GM12878 (cell line): ENCODE measurements at regions of chr5 and their contacts with region 1.

Region 1: DNA sequence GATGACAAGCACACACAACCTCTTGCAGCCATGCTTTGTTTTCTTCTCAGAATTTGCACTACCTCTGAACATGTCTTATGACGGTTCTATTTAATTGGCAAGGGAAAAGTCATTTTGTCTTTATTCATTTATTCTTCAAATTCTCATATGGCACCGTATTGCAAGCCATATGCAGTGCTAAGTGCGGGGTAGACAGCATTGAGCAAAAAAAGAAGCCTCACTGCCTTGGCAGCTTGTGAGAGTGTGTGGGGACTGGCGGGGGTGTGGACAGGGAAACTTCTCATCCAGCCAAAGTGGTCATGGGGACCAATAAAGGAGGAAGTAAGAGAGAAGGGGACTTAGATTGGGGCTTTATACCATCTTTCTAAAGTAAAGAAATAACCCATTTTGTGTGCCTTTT is 160.0 kb downstream of the CDH12 start:
- DNase-seq: no peak
- ATAC-seq: no peak
- H3K4me3 ChIP-seq: no peak overlapping the region
- H3K27ac ChIP-seq: no peak overlapping the region
- H3K4me1 ChIP-seq: no peaks in the 10 kb centered on the region
- H3K27me3 ChIP-seq: no peaks in the 10 kb centered on the region
- CTCF ChIP-seq: no peak
- EP300 ChIP-seq: no peak
- POLR2A ChIP-seq: no peak
- RAD21 ChIP-seq: no peak

Region 2: DNA sequence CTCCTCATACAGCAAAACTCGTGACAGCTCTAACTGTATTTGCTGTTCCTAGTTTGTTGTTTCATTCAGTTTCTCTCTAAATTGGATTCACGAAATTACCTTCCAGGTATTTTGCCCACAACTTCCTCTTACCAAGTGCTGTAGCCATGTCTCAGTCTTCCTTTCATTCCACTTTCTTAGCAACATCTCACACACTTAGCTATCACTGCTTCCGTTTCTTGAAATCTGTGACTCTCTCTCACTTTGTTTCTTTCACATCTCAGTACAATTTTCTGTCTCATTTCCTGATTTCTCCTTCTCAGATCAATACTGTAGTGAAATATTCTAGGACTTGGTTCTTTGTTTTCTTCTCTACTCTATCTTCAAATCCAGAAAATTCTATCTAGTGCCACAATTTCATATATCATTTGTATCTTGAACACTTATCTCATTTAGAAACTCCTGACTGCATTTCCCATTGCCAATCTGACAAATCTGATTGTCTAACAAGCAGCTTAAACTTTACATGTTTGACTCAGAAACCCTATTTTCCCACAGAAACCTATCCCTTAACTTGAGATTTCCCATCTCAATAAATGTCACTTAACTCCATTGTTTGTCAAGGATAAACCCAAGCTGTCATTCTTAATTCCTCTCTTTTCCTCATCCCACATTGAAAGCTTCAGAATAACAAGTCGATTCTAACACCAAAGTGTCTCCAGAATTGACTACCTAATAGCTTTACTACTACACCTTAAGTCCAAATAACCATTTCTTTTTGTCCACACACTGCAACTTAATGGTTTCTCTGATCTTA is 143.0 kb before region 1 on chr5:
- CTCF ChIA-PET with region 1: no interaction called
- POLR2A ChIA-PET with region 1: no interaction called
- RAD21 ChIA-PET with region 1: no interaction called
- SMC1A ChIA-PET with region 1: no interaction called
- in situ Hi-C with region 1: no loop called
- intact Hi-C with region 1: no loop called
- DNase-seq: no peak
- ATAC-seq: no peak
- H3K4me3 ChIP-seq: no peak overlapping the region
- H3K27ac ChIP-seq: no peak overlapping the region
- H3K4me1 ChIP-seq: no peaks in the 10 kb centered on the region
- H3K27me3 ChIP-seq: no peaks in the 10 kb centered on the region
- CTCF ChIP-seq: no peak
- EP300 ChIP-seq: no peak
- POLR2A ChIP-seq: no peak
- RAD21 ChIP-seq: no peak

Region 3: DNA sequence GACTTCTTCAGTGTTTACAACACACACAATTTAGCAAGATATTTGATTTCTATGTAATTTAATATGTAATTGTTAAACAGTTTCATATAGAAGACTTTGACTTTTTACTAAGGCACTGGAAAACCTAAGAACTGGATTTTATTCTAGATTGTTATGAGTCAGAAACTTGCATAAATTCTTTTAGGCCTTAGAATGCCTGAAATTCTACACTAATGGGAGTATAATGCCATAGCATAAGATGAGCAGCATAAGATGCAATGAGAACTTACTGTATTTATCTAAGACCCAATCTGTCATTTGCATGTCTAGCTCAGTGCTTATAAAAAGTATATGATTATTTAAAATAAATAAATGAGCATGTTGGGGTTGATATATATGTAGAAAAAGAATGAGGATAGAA is 125.1 kb before region 1 on chr5:
- CTCF ChIA-PET with region 1: no interaction called
- POLR2A ChIA-PET with region 1: no interaction called
- RAD21 ChIA-PET with region 1: no interaction called
- SMC1A ChIA-PET with region 1: no interaction called
- in situ Hi-C with region 1: no loop called
- intact Hi-C with region 1: no loop called
- DNase-seq: no peak
- ATAC-seq: no peak
- H3K4me3 ChIP-seq: no peak overlapping the region
- H3K27ac ChIP-seq: no peak overlapping the region
- H3K4me1 ChIP-seq: no peaks in the 10 kb centered on the region
- H3K27me3 ChIP-seq: no peaks in the 10 kb centered on the region
- CTCF ChIP-seq: no peak
- EP300 ChIP-seq: no peak
- POLR2A ChIP-seq: no peak
- RAD21 ChIP-seq: no peak

Region 4: DNA sequence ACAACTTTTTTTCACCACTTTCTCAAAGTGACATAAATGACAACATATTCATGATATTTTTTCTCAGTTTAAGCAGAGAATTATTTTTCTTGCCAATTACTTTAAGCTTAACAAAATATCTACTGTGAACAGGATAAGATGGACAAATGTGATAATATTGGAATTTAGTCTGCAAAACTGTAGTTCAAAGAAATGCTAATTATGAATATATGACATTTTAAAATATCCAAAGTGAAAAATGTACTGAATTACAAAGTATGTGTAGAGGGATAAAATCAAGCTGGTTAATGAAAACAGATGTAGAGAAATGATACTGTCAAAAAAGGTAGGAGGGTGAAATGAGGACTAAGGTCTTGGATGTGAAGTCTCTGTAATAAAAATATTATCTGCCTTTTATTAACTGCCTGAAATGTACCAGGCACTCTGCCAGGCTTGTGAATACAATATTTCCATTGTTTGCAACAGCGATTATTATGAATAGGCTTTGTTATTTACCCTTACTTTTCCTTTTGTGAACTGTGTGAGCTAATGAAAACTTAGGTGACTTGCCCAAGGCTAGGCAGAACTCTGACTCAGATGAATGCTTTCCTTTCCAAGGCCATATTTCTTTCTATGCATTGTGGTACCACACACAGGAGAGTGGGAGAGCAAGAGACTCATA is 44.2 kb before region 1 on chr5:
- CTCF ChIA-PET with region 1: no interaction called
- POLR2A ChIA-PET with region 1: no interaction called
- RAD21 ChIA-PET with region 1: no interaction called
- SMC1A ChIA-PET with region 1: no interaction called
- in situ Hi-C with region 1: no loop called
- intact Hi-C with region 1: loop called (anchors 1 kb)
- DNase-seq: no peak
- ATAC-seq: no peak
- H3K4me3 ChIP-seq: no peak overlapping the region
- H3K27ac ChIP-seq: no peak overlapping the region
- H3K4me1 ChIP-seq: no peaks in the 10 kb centered on the region
- H3K27me3 ChIP-seq: no peaks in the 10 kb centered on the region
- CTCF ChIP-seq: no peak
- EP300 ChIP-seq: no peak
- POLR2A ChIP-seq: no peak
- RAD21 ChIP-seq: no peak

Region 5: DNA sequence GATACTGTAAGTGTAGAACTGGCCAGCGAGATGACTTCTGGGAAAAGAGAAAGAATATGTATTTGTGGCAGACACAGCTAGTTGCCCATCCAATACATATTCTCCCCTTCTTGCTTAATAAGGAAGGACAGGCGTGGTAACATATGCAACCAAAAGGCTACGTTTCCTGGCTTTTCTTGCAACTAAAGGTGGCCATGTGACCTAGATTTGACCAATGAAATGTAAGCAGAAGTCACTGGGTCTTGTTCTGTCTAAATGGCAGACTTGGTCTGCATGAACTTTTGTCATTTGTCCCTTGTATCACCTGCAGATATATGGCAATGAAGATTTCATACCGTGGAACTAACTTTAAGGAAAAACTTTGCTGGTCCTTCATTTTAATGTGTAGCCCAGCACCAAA is 23.8 kb before region 1 on chr5:
- CTCF ChIA-PET with region 1: no interaction called
- POLR2A ChIA-PET with region 1: no interaction called
- RAD21 ChIA-PET with region 1: no interaction called
- SMC1A ChIA-PET with region 1: no interaction called
- in situ Hi-C with region 1: no loop called
- intact Hi-C with region 1: no loop called
- DNase-seq: no peak
- ATAC-seq: peak; percentile 54
- H3K4me3 ChIP-seq: no peak overlapping the region
- H3K27ac ChIP-seq: no peak overlapping the region
- H3K4me1 ChIP-seq: no peaks in the 10 kb centered on the region
- H3K27me3 ChIP-seq: no peaks in the 10 kb centered on the region
- CTCF ChIP-seq: no peak
- EP300 ChIP-seq: no peak
- POLR2A ChIP-seq: no peak
- RAD21 ChIP-seq: no peak